ENCODE measurements at regions of chr17 and their contacts with region 1.

Region 1: GRCh38 chr17:36705874-36706731 is 104.7 kb downstream of the MRM1 start:
- DNase-seq: peak; percentile 70
- H3K4me3 Mint-ChIP-seq: no peak overlapping the region
- H3K27ac Mint-ChIP-seq: no peak overlapping the region
- H3K4me1 Mint-ChIP-seq: peaks cover 5% of the 10 kb centered on the region
- H3K27me3 Mint-ChIP-seq: peaks cover 31% of the 10 kb centered on the region

Region 2: DNA sequence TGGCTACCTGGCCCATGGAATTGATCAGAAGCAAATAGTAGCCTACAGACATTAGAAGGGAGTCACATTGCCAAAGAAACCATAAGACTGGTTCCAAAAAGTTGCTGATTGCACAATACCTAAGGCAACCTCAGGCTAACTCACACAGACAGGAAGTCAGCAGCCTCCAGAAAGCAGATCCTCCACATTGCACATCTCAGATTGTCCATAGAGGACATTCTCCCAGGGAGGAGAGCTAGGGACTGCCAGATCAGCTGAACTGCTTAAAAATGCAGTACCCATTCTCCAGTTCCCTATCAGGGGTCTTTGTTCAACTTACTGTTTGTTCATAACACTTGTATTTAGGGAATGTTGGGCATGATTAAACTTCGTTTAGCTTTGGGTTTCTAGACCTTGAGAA is 620.3 kb before region 1 on chr17:
- CTCF ChIA-PET with region 1: no interaction called
- intact Hi-C with region 1: no loop called
- DNase-seq: no peak
- H3K4me3 Mint-ChIP-seq: no peak overlapping the region
- H3K27ac Mint-ChIP-seq: no peak overlapping the region
- H3K4me1 Mint-ChIP-seq: peaks cover 20% of the 10 kb centered on the region
- H3K27me3 Mint-ChIP-seq: peaks cover 23% of the 10 kb centered on the region

Region 3: GRCh38 chr17:36629252-36629847 is 76.8 kb before region 1 on chr17:
- CTCF ChIA-PET with region 1: no interaction called
- intact Hi-C with region 1: loop called (anchors 1 kb)
- DNase-seq: peak; percentile 87
- H3K4me3 Mint-ChIP-seq: no peak overlapping the region
- H3K27ac Mint-ChIP-seq: no peak overlapping the region
- H3K4me1 Mint-ChIP-seq: no peaks in the 10 kb centered on the region
- H3K27me3 Mint-ChIP-seq: no peaks in the 10 kb centered on the region

Region 4: GRCh38 chr17:36641877-36642845 is 63.9 kb before region 1 on chr17:
- CTCF ChIA-PET with region 1: no interaction called
- intact Hi-C with region 1: loop called (anchors 5 kb)
- DNase-seq: peak; percentile 51
- H3K4me3 Mint-ChIP-seq: peak overlapping the region; percentile 72
- H3K27ac Mint-ChIP-seq: no peak overlapping the region
- H3K4me1 Mint-ChIP-seq: peaks cover 9% of the 10 kb centered on the region
- H3K27me3 Mint-ChIP-seq: peaks cover 71% of the 10 kb centered on the region

Region 5: GRCh38 chr17:36657763-36658490 is 48.2 kb before region 1 on chr17:
- CTCF ChIA-PET with region 1: no interaction called
- intact Hi-C with region 1: loop called (anchors 5 kb)
- DNase-seq: peak; percentile 41
- H3K4me3 Mint-ChIP-seq: peak overlapping the region; percentile 39
- H3K27ac Mint-ChIP-seq: no peak overlapping the region
- H3K4me1 Mint-ChIP-seq: peaks cover 7% of the 10 kb centered on the region
- H3K27me3 Mint-ChIP-seq: peaks cover 34% of the 10 kb centered on the region

Region 6: GRCh38 chr17:36691606-36692005 is 14.5 kb before region 1 on chr17:
- CTCF ChIA-PET with region 1: no interaction called
- intact Hi-C with region 1: no loop called
- DNase-seq: no peak
- H3K4me3 Mint-ChIP-seq: no peak overlapping the region
- H3K27ac Mint-ChIP-seq: no peak overlapping the region
- H3K4me1 Mint-ChIP-seq: no peaks in the 10 kb centered on the region
- H3K27me3 Mint-ChIP-seq: peaks cover 1% of the 10 kb centered on the region

Region 7: GRCh38 chr17:36742267-36743000 is 36.3 kb after region 1 on chr17:
- CTCF ChIA-PET with region 1: no interaction called
- intact Hi-C with region 1: no loop called
- DNase-seq: no peak
- H3K4me3 Mint-ChIP-seq: no peak overlapping the region
- H3K27ac Mint-ChIP-seq: no peak overlapping the region
- H3K4me1 Mint-ChIP-seq: no peaks in the 10 kb centered on the region
- H3K27me3 Mint-ChIP-seq: no peaks in the 10 kb centered on the region

Region 8: GRCh38 chr17:36755586-36755985 is 49.5 kb after region 1 on chr17:
- CTCF ChIA-PET with region 1: interaction called, 17 read pairs
- intact Hi-C with region 1: loop called (anchors 1 kb)
- DNase-seq: peak; percentile 55
- H3K4me3 Mint-ChIP-seq: no peak overlapping the region
- H3K27ac Mint-ChIP-seq: no peak overlapping the region
- H3K4me1 Mint-ChIP-seq: no peaks in the 10 kb centered on the region
- H3K27me3 Mint-ChIP-seq: no peaks in the 10 kb centered on the region

Region 9: GRCh38 chr17:36948717-36949460 is 242.8 kb after region 1 on chr17 and contains the start of gene AATF:
- CTCF ChIA-PET with region 1: no interaction called
- intact Hi-C with region 1: loop called (anchors 1 kb)
- DNase-seq: peak; percentile 96
- H3K4me3 Mint-ChIP-seq: peak within 1 kb of the TSS; percentile 93
- H3K27ac Mint-ChIP-seq: peak within 1 kb of the TSS; percentile 87
- H3K4me1 Mint-ChIP-seq: peaks cover 39% of the 10 kb centered on the region
- H3K27me3 Mint-ChIP-seq: peaks cover 28% of the 10 kb centered on the region
- total RNA-seq, gene AATF: 58.9 to 69.8 TPM

Region 10: DNA sequence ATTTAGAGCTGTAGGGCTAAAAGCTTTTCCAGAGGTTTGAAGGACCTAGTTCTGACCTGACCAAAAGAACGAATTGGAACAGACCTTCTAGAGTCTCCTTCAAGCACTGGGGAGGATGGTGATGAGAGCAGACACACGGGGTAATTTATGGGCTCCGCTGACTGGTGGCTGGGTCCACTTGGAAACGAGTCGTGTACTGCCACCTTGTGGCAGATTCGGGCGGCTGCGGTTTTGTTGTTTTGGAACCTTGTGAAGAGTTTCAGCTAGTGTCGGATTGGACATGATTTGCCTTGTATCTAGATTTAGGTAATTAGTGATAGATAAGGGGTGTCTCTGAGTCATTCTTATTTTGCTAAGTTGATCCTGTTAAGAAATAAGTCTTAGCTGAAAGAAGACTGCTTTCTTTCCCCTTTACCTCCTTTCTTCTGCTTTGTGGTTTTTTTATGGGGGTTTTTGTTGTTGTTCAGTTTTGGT is 341.6 kb after region 1 on chr17:
- CTCF ChIA-PET with region 1: interaction called, 4 read pairs
- intact Hi-C with region 1: loop called (anchors 1 kb)
- DNase-seq: peak; percentile 92
- H3K4me3 Mint-ChIP-seq: no peak overlapping the region
- H3K27ac Mint-ChIP-seq: no peak overlapping the region
- H3K4me1 Mint-ChIP-seq: peaks cover 12% of the 10 kb centered on the region
- H3K27me3 Mint-ChIP-seq: no peaks in the 10 kb centered on the region